HEK293 (cell line): ENCODE measurements at regions of chr5 and their contacts with region 1.

Region 1: DNA sequence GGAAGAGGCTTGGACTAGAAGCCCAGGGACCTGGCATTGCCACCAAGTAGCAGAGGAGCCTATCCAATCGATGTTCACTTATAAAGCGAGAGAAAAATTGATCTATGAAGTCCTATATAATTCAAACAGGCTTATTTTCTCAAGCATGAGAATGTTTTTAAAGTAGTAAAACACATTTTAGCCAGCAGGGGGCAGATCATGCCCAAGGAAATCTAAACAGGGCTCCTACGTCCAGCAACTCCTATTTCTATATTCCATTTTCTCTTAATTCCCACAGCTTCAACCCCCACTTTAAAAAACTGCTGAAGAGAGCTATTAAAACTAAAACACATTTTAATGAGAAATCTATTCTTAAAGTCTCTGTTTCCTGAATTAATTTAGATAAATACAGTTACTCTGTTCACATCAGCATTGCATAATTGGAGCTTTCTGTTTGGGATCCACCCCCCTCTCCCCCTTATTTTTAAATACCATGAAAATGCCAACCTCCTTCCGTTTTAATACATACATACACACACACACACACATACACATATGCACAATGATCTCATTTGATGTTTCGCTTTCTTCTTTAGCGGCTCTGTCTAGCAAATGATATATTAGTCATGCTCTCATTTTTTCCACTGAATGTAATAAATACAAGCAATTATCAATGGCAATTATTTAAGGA is 144.9 kb downstream of the MYO10 start:
- H3K4me3 ChIP-seq: no peak overlapping the region
- H3K27ac ChIP-seq: no peak overlapping the region
- H3K4me1 ChIP-seq: peaks cover 8% of the 10 kb centered on the region; the same call in 1 of the 2 replicates
- CTCF ChIP-seq: no peak

Region 2: GRCh38 chr5:16805486-16805885 is 14.3 kb after region 1 on chr5:
- CTCF ChIA-PET with region 1: interaction called, 10 read pairs
- POLR2A ChIA-PET with region 1: no interaction called
- H3K4me3 ChIP-seq: no peak overlapping the region
- H3K27ac ChIP-seq: no peak overlapping the region
- H3K4me1 ChIP-seq: 0 out of 2 replicates have a peak, but pooled peaks cover 2% of the 10 kb centered on the region
- CTCF ChIP-seq: no peak

Region 3: GRCh38 chr5:16934123-16934522 is 143.0 kb after region 1 on chr5:
- CTCF ChIA-PET with region 1: interaction called, 28 read pairs
- POLR2A ChIA-PET with region 1: interaction called, 5 read pairs
- H3K4me3 ChIP-seq: peak overlapping the region; percentile 95
- H3K27ac ChIP-seq: no peak overlapping the region
- H3K4me1 ChIP-seq: peaks cover 35% of the 10 kb centered on the region
- CTCF ChIP-seq: peak; percentile 80